ENCODE measurements at regions of chr4 and their contacts with region 1.

Region 1: GRCh38 chr4:105471566-105472176 is 2.2 kb downstream of the PPA2 start:
- DNase-seq: peak; percentile 92
- H3K4me3 Mint-ChIP-seq: peak overlapping the region; percentile 72
- H3K27ac Mint-ChIP-seq: peak overlapping the region; percentile 7
- H3K4me1 Mint-ChIP-seq: peaks cover 29% of the 10 kb centered on the region
- H3K27me3 Mint-ChIP-seq: peaks cover 5% of the 10 kb centered on the region

Region 2: GRCh38 chr4:104930298-104930697 is 541.4 kb before region 1 on chr4:
- intact Hi-C with region 1: loop called (anchors 2 kb)
- DNase-seq: no peak
- H3K4me3 Mint-ChIP-seq: peak overlapping the region; percentile 40
- H3K27ac Mint-ChIP-seq: no peak overlapping the region
- H3K4me1 Mint-ChIP-seq: peaks cover 32% of the 10 kb centered on the region
- H3K27me3 Mint-ChIP-seq: peaks cover 11% of the 10 kb centered on the region

Region 3: GRCh38 chr4:105061136-105061696 is 410.5 kb before region 1 on chr4:
- intact Hi-C with region 1: loop called (anchors 1 kb)
- DNase-seq: peak; percentile 81
- H3K4me3 Mint-ChIP-seq: peak overlapping the region; percentile 70
- H3K27ac Mint-ChIP-seq: peak overlapping the region; percentile 94
- H3K4me1 Mint-ChIP-seq: peaks cover 35% of the 10 kb centered on the region
- H3K27me3 Mint-ChIP-seq: peaks cover 1% of the 10 kb centered on the region

Region 4: DNA sequence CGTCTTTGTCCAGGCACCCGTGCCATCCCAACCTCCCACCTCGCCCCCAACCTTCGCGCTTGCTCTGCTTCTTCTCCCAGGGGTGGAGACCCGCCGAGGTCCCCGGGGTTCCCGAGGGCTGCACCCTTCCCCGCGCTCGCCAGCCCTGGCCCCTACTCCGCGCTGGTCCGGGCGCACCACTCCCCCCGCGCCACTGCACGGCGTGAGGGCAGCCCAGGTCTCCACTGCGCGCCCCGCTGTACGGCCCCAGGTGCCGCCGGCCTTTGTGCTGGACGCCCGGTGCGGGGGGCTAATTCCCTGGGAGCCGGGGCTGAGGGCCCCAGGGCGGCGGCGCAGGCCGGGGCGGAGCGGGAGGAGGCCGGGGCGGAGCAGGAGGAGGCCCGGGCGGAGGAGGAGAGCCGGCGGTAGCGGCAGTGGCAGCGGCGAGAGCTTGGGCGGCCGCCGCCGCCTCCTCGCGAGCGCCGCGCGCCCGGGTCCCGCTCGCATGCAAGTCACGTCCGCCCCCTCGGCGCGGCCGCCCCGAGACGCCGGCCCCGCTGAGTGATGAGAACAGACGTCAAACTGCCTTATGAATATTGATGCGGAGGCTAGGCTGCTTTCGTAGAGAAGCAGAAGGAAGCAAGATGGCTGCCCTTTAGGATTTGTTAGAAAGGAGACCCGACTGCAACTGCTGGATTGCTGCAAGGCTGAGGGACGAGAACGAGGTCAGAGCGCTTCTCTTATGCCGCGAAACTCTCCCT is 325.2 kb before region 1 on chr4 and contains the start of gene TET2:
- intact Hi-C with region 1: loop called (anchors 1 kb)
- DNase-seq: peak; percentile 94
- H3K4me3 Mint-ChIP-seq: peak within 1 kb of the TSS; percentile 99
- H3K27ac Mint-ChIP-seq: peak within 1 kb of the TSS; percentile 99
- H3K4me1 Mint-ChIP-seq: peaks cover 25% of the 10 kb centered on the region
- H3K27me3 Mint-ChIP-seq: no peaks in the 10 kb centered on the region
- total RNA-seq, gene TET2: 26.1 and 28.9 TPM in 2 replicates

Region 5: GRCh38 chr4:105215609-105216313 is 255.9 kb before region 1 on chr4:
- intact Hi-C with region 1: loop called (anchors 1 kb)
- DNase-seq: no peak
- H3K4me3 Mint-ChIP-seq: peak overlapping the region; percentile 42
- H3K27ac Mint-ChIP-seq: peak overlapping the region; percentile 63
- H3K4me1 Mint-ChIP-seq: peaks cover 12% of the 10 kb centered on the region
- H3K27me3 Mint-ChIP-seq: no peaks in the 10 kb centered on the region

Region 6: DNA sequence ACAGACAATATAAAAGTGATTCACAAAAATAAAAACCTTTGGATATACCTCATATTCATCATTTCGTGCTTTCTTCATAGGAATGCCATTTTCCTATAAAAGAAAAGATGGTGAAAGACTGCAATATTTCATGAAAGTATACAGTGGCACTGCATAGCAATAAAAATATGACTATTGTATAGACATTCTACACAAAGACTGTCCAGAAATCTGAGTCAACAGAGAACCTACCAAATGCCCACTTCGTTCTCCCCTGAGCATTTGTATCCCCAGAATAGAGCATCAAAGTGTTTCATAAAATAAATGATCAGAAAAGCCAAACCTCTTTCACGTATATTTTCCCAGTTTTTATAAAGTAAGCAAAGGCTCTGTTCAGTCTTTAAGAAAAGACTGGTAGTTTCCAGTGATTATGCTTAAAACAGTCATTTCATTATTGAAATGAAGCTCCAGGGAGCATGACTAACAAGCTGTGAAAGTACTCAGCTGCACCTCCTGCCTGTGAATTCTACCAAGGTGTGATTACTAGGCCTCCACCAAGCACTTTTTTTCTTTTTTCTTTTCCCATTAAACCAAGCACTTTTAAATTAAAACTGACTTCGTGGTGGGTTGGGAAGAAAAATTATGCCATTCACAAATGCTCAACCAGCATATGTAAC is 18.0 kb before region 1 on chr4:
- intact Hi-C with region 1: loop called (anchors 1 kb)
- DNase-seq: no peak
- H3K4me3 Mint-ChIP-seq: no peak overlapping the region
- H3K27ac Mint-ChIP-seq: peak overlapping the region; percentile 79
- H3K4me1 Mint-ChIP-seq: peaks cover 9% of the 10 kb centered on the region
- H3K27me3 Mint-ChIP-seq: no peaks in the 10 kb centered on the region

Region 7: GRCh38 chr4:105741548-105741947 is 269.9 kb after region 1 on chr4:
- intact Hi-C with region 1: no loop called
- DNase-seq: no peak
- H3K4me3 Mint-ChIP-seq: no peak overlapping the region
- H3K27ac Mint-ChIP-seq: no peak overlapping the region
- H3K4me1 Mint-ChIP-seq: no peaks in the 10 kb centered on the region
- H3K27me3 Mint-ChIP-seq: no peaks in the 10 kb centered on the region

Region 8: GRCh38 chr4:106315968-106316772 is 844.5 kb after region 1 on chr4 and contains the starts of genes AIMP1 and TBCK:
- intact Hi-C with region 1: loop called (anchors 5 kb)
- DNase-seq: peak; percentile 96
- H3K4me3 Mint-ChIP-seq: no peak within 1 kb of the TSS
- H3K27ac Mint-ChIP-seq: peak within 1 kb of the TSS; percentile 87
- H3K4me1 Mint-ChIP-seq: peaks cover 23% of the 10 kb centered on the region
- H3K27me3 Mint-ChIP-seq: no peaks in the 10 kb centered on the region
- total RNA-seq, gene AIMP1: 82.6 and 84.7 TPM in 2 replicates
- total RNA-seq, gene TBCK: 28.1 and 29.5 TPM in 2 replicates

Measured in activated CD4-positive, alpha-beta T cell treated with anti-CD3 and anti-CD28 coated beads, Interleukin-2, amount 10 ng/mL, durations not matched to agents 24 days and 14 days (primary cell).